Posterior vena cava (tissue), 2 donors: ENCODE measurements at regions of chr1 and their contacts with region 1.

Region 1: GRCh38 chr1:68321084-68321685 is 88.9 kb upstream of the WLS start:
- DNase-seq: no peak

Region 2: GRCh38 chr1:68232354-68233148 is 88.6 kb before region 1 on chr1 and contains the start of gene WLS:
- intact Hi-C with region 1: loop called (anchors 2 to 10 kb)
- DNase-seq: peak; percentile 93
- total RNA-seq, gene WLS: 53.3 to 83.6 TPM

Region 3: GRCh38 chr1:68615312-68615711 is 294.1 kb after region 1 on chr1:
- intact Hi-C with region 1: no loop called
- DNase-seq: no peak